Dorsolateral prefrontal cortex (tissue), 120 donors: ENCODE measurements at regions of chr2 and their contacts with region 1.

Region 1: DNA sequence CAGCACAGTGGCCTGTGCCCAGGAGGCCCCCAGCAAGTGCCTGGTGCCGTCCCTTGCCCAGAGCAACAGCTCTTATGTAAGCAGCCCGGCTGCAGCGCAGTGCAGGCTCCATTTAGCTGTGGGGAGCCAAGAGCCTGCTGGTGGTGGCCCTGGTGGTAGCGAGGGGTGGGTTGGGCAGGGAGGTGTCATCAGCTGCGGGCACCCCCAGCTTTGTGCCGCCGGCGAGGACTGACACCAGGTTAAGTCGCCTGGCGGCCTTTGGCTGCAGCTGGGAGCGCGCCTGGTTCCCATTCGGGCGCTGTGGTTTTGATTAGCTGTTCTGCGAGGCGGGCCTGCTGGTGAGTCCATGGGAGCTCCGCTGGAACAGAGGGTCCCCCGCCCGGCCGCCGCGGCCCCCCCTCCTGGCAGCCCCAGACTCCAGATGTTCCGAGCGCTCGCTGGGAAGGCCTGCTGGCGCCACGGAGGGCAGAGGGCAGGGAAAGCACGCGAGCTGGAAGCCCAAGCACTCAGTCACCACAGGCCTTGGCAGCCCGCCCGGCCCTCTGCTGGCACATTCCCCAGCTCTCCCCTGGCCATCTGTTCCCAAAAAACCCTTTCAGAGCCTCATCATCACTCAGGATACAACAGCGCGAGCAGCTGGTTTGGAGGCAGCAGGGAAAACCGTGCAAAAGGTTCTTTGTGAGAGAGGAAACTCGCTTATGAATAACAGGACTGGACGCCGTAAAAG is 18.4 kb downstream of the ATOH8 start:
- DNase-seq: peak; percentile 95 to 99 (median 97)
- H3K4me3 ChIP-seq: peak overlapping the region in 56 of 59 donors; percentile 3 to 59 (median 36)
- H3K27ac ChIP-seq: peak overlapping the region; percentile 46 to 97 (median 91)
- H3K27me3 ChIP-seq: no peaks in the 10 kb centered on the region
- CTCF ChIP-seq: peak in 40 of 56 donors; percentile 4 to 57 (median 38)

Region 2: GRCh38 chr2:85437488-85438284 is 334.5 kb before region 1 on chr2:
- intact Hi-C with region 1: loop called in 1 of 2 experiments (anchors 10 kb)
- DNase-seq: peak; percentile 63 to 93 (median 86)
- H3K4me3 ChIP-seq: peak overlapping the region; percentile 5 to 63 (median 45)
- H3K27ac ChIP-seq: peak overlapping the region; percentile 86 to 100 (median 100)
- H3K27me3 ChIP-seq: no peaks in the 10 kb centered on the region
- CTCF ChIP-seq: peak in 20 of 56 donors; percentile 4 to 31 (median 22)

Region 3: GRCh38 chr2:85741833-85742455 is 30.2 kb before region 1 on chr2:
- intact Hi-C with region 1: loop called (anchors 1 kb)
- DNase-seq: peak in 9 of 10 donors; percentile 47 to 85 (median 75)
- H3K4me3 ChIP-seq: peak overlapping the region in 44 of 59 donors; percentile 2 to 56 (median 26)
- H3K27ac ChIP-seq: peak overlapping the region; percentile 78 to 100 (median 98)
- H3K27me3 ChIP-seq: no peaks in the 10 kb centered on the region
- CTCF ChIP-seq: peak in 10 of 56 donors; percentile 9 to 27 (median 16)

Region 4: GRCh38 chr2:85750587-85751575 is 21.3 kb before region 1 on chr2:
- intact Hi-C with region 1: loop called in 1 of 2 experiments (anchors 1 kb)
- DNase-seq: peak; percentile 68 to 87 (median 80)
- H3K4me3 ChIP-seq: no peak overlapping the region
- H3K27ac ChIP-seq: peak overlapping the region in 42 of 59 donors; percentile 3 to 87 (median 42)
- H3K27me3 ChIP-seq: peaks cover 0 to 6% (median 0%) of the 10 kb centered on the region in 45 donors
- CTCF ChIP-seq: peak; percentile 38 to 93 (median 85)

Region 5: GRCh38 chr2:85790499-85791188 is 18.5 kb after region 1 on chr2:
- intact Hi-C with region 1: loop called in 1 of 2 experiments (anchors 1 kb)
- DNase-seq: peak in 2 of 10 donors; percentile 43 to 51
- H3K4me3 ChIP-seq: no peak overlapping the region
- H3K27ac ChIP-seq: peak overlapping the region in 25 of 59 donors; percentile 2 to 97 (median 41)
- H3K27me3 ChIP-seq: no peaks in the 10 kb centered on the region
- CTCF ChIP-seq: no peak

Region 6: GRCh38 chr2:85797921-85798320 is 25.7 kb after region 1 on chr2:
- intact Hi-C with region 1: loop called (anchors 1 kb)
- DNase-seq: peak in 4 of 10 donors; percentile 35 to 64 (median 52)
- H3K4me3 ChIP-seq: no peak overlapping the region
- H3K27ac ChIP-seq: peak overlapping the region in 39 of 59 donors; percentile 55 to 99 (median 94)
- H3K27me3 ChIP-seq: no peaks in the 10 kb centered on the region
- CTCF ChIP-seq: peak in 55 of 56 donors; percentile 44 to 86 (median 68)